K562 (cell line): ENCODE measurements at regions of chr11 and their contacts with region 1.

Region 1: GRCh38 chr11:107799218-107799859 is 59.2 kb downstream of the SLC35F2 start:
- DNase-seq: peak; percentile 65 to 76 (median 68)
- ATAC-seq: peak; percentile 97
- H3K4me3 ChIP-seq: no peak overlapping the region
- H3K27ac ChIP-seq: no peak overlapping the region
- H3K4me1 ChIP-seq: no peaks in the 10 kb centered on the region
- H3K27me3 ChIP-seq: no peaks in the 10 kb centered on the region
- CTCF ChIP-seq: peak; percentile 92 to 96 (median 92)
- EP300 ChIP-seq: no peak
- POLR2A ChIP-seq: no peak
- RAD21 ChIP-seq: peak in 1 of 2 experiments; percentile 50; a peak in 2 of 4 replicates

Region 2: GRCh38 chr11:107741044-107741823 is 58.1 kb before region 1 on chr11:
- CTCF ChIA-PET with region 1: interaction called, 3 read pairs
- POLR2A ChIA-PET with region 1: no interaction called
- in situ Hi-C with region 1: no loop called
- intact Hi-C with region 1: loop called (anchors 2 kb)
- DNase-seq: peak; percentile 19 to 68 (median 35)
- ATAC-seq: peak; percentile 96
- H3K4me3 ChIP-seq: no peak overlapping the region
- H3K27ac ChIP-seq: no peak overlapping the region
- H3K4me1 ChIP-seq: no peaks in the 10 kb centered on the region
- H3K27me3 ChIP-seq: no peaks in the 10 kb centered on the region; a peak in 1 of 5 replicates
- CTCF ChIP-seq: peak; percentile 79 to 87 (median 85)
- EP300 ChIP-seq: no peak
- POLR2A ChIP-seq: no peak
- RAD21 ChIP-seq: peak; percentile 59 to 90

Region 3: GRCh38 chr11:107858217-107859070 is 59.1 kb after region 1 on chr11 and contains the start of gene SLC35F2:
- CTCF ChIA-PET with region 1: no interaction called
- POLR2A ChIA-PET with region 1: interaction called, 3 read pairs
- in situ Hi-C with region 1: no loop called
- intact Hi-C with region 1: loop called (anchors 5 kb)
- DNase-seq: peak; percentile 72 to 86 (median 78)
- ATAC-seq: peak; percentile 92
- H3K4me3 ChIP-seq: peak within 1 kb of the TSS; percentile 77
- H3K27ac ChIP-seq: peak within 1 kb of the TSS; percentile 58
- H3K4me1 ChIP-seq: peaks cover 6 to 17% of the 10 kb centered on the region in 2 experiments; a peak in 3 of 5 replicates
- H3K27me3 ChIP-seq: no peaks in the 10 kb centered on the region; a peak in 1 of 5 replicates
- CTCF ChIP-seq: peak; percentile 4 to 12 (median 9); a peak in 1 of 6 replicates
- EP300 ChIP-seq: 0 out of 2 replicates have a peak, but pooled peaks have one; percentile 5
- POLR2A ChIP-seq: peak; percentile 85
- RAD21 ChIP-seq: no peak
- polyA plus RNA-seq, gene SLC35F2: 28.6 to 38.3 TPM

Region 4: GRCh38 chr11:107898270-107898669 is 98.9 kb after region 1 on chr11:
- CTCF ChIA-PET with region 1: no interaction called
- POLR2A ChIA-PET with region 1: no interaction called
- in situ Hi-C with region 1: no loop called
- intact Hi-C with region 1: loop called (anchors 10 kb)
- DNase-seq: peak in 3 of 4 experiments; percentile 11 to 42 (median 32)
- ATAC-seq: peak; percentile 95
- H3K4me3 ChIP-seq: no peak overlapping the region
- H3K27ac ChIP-seq: no peak overlapping the region
- H3K4me1 ChIP-seq: no peaks in the 10 kb centered on the region
- H3K27me3 ChIP-seq: peaks cover 9 to 18% of the 10 kb centered on the region in 2 experiments; a peak in 4 of 5 replicates
- CTCF ChIP-seq: peak; percentile 63 to 76 (median 72)
- EP300 ChIP-seq: no peak
- POLR2A ChIP-seq: no peak
- RAD21 ChIP-seq: peak; percentile 57 to 85